ENCODE measurements at regions of chr12 and their contacts with region 1.

Region 1: GRCh38 chr12:84507956-84508850 is 404.4 kb downstream of the SLC6A15 start:
- DNase-seq: peak; percentile 88
- H3K4me3 ChIP-seq: no peak overlapping the region
- H3K27ac ChIP-seq: peak overlapping the region; percentile 72
- H3K4me1 ChIP-seq: peaks cover 31% of the 10 kb centered on the region
- H3K27me3 ChIP-seq: no peaks in the 10 kb centered on the region
- CTCF ChIP-seq: peak; percentile 73 to 75

Region 2: GRCh38 chr12:83664650-83665049 is 843.6 kb before region 1 on chr12:
- CTCF ChIA-PET with region 1: no interaction called
- dilution Hi-C with region 1: no loop called
- in situ Hi-C with region 1: no loop called
- intact Hi-C with region 1: no loop called
- DNase-seq: no peak
- H3K4me3 ChIP-seq: no peak overlapping the region
- H3K27ac ChIP-seq: no peak overlapping the region
- H3K4me1 ChIP-seq: no peaks in the 10 kb centered on the region
- H3K27me3 ChIP-seq: no peaks in the 10 kb centered on the region
- CTCF ChIP-seq: no peak

Region 3: GRCh38 chr12:83985068-83985467 is 523.1 kb before region 1 on chr12:
- CTCF ChIA-PET with region 1: no interaction called
- dilution Hi-C with region 1: no loop called
- in situ Hi-C with region 1: no loop called
- intact Hi-C with region 1: no loop called
- DNase-seq: no peak
- H3K4me3 ChIP-seq: no peak overlapping the region
- H3K27ac ChIP-seq: no peak overlapping the region
- H3K4me1 ChIP-seq: no peaks in the 10 kb centered on the region
- H3K27me3 ChIP-seq: no peaks in the 10 kb centered on the region
- CTCF ChIP-seq: no peak

Region 4: DNA sequence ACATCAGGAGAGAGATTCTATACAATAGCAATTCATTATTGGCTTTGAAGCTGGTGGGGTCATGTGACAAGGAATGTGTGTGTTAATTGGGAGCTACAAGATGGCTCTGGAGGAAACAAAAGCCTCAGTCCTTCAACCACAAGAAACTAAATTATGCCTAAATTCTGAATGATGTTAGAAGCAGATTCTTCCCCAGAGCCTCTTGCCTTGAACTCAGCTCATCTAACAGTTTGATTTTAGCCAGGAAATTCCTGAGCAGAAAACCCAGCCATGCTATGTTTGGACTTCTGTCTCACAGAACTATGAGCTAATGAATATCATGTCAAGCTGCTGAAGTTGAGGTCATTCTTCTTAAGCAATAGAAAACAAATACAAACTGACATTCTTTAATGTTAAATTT is 129.7 kb after region 1 on chr12:
- CTCF ChIA-PET with region 1: no interaction called
- dilution Hi-C with region 1: no loop called
- in situ Hi-C with region 1: no loop called
- intact Hi-C with region 1: no loop called
- DNase-seq: no peak
- H3K4me3 ChIP-seq: no peak overlapping the region
- H3K27ac ChIP-seq: no peak overlapping the region
- H3K4me1 ChIP-seq: no peaks in the 10 kb centered on the region
- H3K27me3 ChIP-seq: no peaks in the 10 kb centered on the region
- CTCF ChIP-seq: no peak

Region 5: DNA sequence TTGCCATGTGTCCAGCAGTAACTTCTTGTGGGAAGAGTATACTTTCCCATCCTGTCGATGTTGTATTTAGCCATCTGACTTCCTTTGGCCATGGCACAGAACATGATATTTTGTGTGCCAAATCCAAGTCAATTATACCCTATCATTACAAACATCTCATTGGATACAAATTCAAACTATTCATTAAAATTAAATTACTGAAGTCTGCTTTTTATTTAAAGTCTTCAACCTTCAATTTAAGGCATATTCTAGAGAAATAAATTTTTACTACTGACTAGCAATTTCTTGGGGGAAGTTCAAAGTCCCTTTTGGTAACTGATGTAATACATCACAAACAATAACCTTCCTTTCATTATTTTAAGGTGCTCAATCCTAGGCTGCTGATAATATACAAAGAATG is 211.8 kb after region 1 on chr12:
- CTCF ChIA-PET with region 1: no interaction called
- dilution Hi-C with region 1: no loop called
- in situ Hi-C with region 1: no loop called
- intact Hi-C with region 1: no loop called
- DNase-seq: no peak
- H3K4me3 ChIP-seq: no peak overlapping the region
- H3K27ac ChIP-seq: no peak overlapping the region
- H3K4me1 ChIP-seq: no peaks in the 10 kb centered on the region
- H3K27me3 ChIP-seq: peaks cover 2% of the 10 kb centered on the region
- CTCF ChIP-seq: no peak

Region 6: GRCh38 chr12:84856156-84856900 is 348.1 kb after region 1 on chr12:
- CTCF ChIA-PET with region 1: interaction called, 4 read pairs
- dilution Hi-C with region 1: no loop called
- in situ Hi-C with region 1: no loop called
- intact Hi-C with region 1: loop called (anchors 5 kb)
- DNase-seq: peak; percentile 92
- H3K4me3 ChIP-seq: no peak overlapping the region
- H3K27ac ChIP-seq: peak overlapping the region; percentile 56
- H3K4me1 ChIP-seq: peaks cover 26% of the 10 kb centered on the region
- H3K27me3 ChIP-seq: no peaks in the 10 kb centered on the region
- CTCF ChIP-seq: no peak

Measured in mammary epithelial cell (primary cell).